BJ (cell line): ENCODE measurements at regions of chr3 and their contacts with region 1.

Region 1: DNA sequence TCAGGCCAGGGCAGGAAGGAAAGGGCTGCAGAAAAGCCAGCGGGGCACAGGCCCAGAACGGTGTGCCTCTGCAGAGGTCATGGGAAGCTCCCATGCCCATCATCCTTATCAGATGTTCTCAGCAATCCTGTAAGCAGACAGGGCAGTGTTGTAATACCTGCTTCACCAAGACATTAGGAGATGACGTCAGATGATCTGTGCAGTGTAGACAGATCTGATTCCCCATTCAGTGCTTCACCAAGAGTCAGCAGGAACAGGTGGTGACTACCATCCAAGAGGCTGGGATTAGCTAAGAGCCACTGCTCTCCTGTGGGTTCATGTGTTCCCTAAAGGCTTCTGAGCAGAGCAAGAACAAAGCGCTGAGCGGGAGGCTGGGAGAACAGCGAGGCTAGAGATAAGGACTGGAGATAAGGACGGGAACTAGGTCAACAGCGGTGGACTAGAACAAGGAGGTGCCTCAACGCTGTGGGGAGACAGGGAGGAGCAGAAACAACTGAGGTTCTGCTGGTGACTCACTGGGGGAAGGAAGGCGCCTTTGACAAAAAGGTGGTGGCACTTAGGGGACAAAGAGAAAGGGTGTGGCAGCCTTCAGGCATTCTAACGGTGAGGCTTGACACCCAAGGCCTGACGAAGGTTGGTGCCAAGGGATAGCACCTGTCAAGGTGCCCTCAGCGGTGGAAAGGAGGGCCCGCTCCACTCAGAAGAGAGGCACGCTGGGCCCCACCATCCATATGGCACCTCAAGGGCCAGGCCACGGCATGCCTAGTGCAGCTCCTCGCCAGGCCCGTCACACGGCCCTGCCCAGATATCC is 28.4 kb downstream of the CCDC12 start:
- DNase-seq: no peak
- H3K4me3 ChIP-seq: no peak overlapping the region
- H3K27me3 ChIP-seq: no peaks in the 10 kb centered on the region
- CTCF ChIP-seq: no peak

Region 2: DNA sequence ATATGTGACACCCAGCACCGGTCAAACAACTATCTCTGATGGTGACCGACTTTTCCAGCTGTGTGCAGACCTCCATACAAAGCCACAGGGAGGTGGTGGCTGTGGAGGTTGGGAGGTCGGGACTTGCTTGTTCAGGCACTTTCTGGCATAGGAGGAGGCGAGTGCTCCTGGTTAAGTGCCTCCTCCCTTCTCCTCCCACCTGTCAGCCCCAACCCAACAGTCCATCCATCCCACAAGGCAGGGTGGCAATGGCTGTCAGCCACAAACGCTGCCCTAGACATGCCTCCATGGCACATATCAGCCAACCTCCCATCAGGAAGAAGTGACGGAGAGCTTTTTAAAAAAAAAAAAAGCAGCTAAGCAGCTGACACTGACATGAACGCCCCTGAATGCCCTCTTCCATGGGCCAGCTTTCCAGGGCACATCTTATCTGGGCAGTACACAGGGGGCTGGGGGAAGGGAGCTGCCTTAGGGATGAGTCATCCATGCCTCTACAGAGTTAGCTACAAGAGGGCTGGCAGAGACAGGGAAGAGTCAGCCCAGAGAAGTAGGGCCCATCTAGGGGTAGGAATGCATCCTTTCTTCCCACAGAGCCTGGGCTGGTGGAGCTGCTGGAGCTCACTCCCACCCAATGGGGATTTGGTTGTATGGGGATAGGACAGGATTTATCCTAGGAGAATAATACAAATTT is 12.9 kb before region 1 on chr3:
- CTCF ChIA-PET with region 1: interaction called, 10 read pairs
- POLR2A ChIA-PET with region 1: interaction called, 4 read pairs
- DNase-seq: peak; percentile 75
- H3K4me3 ChIP-seq: no peak overlapping the region
- H3K27me3 ChIP-seq: no peaks in the 10 kb centered on the region
- CTCF ChIP-seq: peak; percentile 94

Region 3: DNA sequence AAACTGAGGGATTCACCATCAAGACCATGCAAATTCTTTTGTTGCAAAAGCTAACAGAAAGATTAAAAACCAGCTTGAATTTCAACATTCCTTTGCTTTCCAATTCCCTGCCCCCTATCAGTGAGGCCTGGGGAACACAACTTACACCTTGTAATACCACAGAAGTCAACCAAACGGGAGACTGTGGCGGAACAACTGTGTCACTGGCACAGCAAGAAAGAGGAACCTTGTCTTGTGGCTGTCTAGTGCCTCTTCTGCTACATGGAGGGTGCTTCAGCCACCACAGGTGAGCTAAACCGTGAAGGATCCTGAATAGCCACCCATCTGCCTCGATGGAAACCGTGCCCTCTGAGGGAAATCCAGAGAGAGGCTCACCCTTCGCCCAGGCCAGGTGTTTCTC is 17.0 kb after region 1 on chr3:
- CTCF ChIA-PET with region 1: no interaction called
- POLR2A ChIA-PET with region 1: interaction called, 10 read pairs
- DNase-seq: no peak
- H3K4me3 ChIP-seq: no peak overlapping the region
- H3K27me3 ChIP-seq: no peaks in the 10 kb centered on the region
- CTCF ChIP-seq: no peak

Region 4: GRCh38 chr3:47089630-47090029 is 141.4 kb after region 1 on chr3:
- CTCF ChIA-PET with region 1: no interaction called
- POLR2A ChIA-PET with region 1: no interaction called
- DNase-seq: no peak
- H3K4me3 ChIP-seq: no peak overlapping the region
- H3K27me3 ChIP-seq: no peaks in the 10 kb centered on the region
- CTCF ChIP-seq: no peak